PC-3 (cell line): ENCODE measurements at regions of chr1 and their contacts with region 1.

Region 1: GRCh38 chr1:217469983-217470382 is 160.9 kb downstream of the GPATCH2 start:
- DNase-seq: no peak
- ATAC-seq: no peak
- H3K4me3 ChIP-seq: no peak overlapping the region
- H3K27ac ChIP-seq: no peak overlapping the region
- H3K4me1 ChIP-seq: no peaks in the 10 kb centered on the region
- H3K27me3 ChIP-seq: no peaks in the 10 kb centered on the region
- CTCF ChIP-seq: no peak

Region 2: DNA sequence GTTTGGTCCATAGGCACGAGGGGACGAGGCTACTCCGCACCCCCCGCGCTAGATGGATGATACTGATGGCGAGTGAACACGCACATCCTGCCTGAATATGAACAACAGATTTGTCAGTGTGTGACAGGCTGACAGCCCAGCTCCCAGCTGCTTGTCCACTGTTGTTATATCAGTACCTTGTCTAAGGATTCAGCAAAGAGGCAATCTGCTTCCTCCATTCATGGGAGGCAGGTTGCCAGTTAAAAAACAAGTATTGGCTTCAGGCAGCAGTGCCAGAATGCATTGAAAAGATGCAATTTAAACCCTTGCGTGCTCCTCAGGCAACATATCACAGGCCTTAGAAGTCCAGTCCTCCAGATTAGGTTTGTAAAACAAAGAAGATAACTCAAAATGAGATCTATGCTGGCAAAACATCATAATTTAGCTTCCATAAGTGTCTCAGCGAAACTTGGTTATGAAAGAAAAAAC is 62.4 kb before region 1 on chr1:
- CTCF ChIA-PET with region 1: no interaction called
- POLR2A ChIA-PET with region 1: no interaction called
- intact Hi-C with region 1: loop called (anchors 5 kb)
- DNase-seq: no peak
- ATAC-seq: no peak
- H3K4me3 ChIP-seq: no peak overlapping the region
- H3K27ac ChIP-seq: no peak overlapping the region
- H3K4me1 ChIP-seq: no peaks in the 10 kb centered on the region
- H3K27me3 ChIP-seq: no peaks in the 10 kb centered on the region
- CTCF ChIP-seq: no peak